Posterior cingulate gyrus (tissue), 11 donors: ENCODE measurements at regions of chr4 and their contacts with region 1.

Region 1: GRCh38 chr4:147160908-147161513 is 215.3 kb upstream of the TTC29 start:
- DNase-seq: no peak

Region 2: DNA sequence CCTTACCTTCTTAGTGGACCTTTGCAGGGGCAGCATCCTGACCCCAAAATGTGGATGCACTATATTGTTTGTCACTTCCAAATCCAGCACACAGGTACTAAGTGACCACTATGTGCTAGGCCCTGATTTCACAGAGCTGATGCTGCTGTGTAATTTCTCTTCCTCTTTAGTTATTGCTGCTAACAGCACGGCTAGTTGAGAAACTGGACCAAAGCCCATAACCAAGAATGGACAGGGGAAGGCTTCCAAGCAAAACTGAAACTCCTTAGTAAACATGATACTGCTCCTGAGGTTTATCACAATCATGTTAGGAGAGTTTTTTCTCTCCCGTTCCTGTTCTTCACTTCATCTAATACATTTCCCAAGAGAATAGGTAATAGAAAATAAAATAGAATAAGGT is 42.5 kb before region 1 on chr4:
- intact Hi-C with region 1: no loop called
- DNase-seq: no peak

Region 3: GRCh38 chr4:147518846-147519767 is 358.1 kb after region 1 on chr4:
- intact Hi-C with region 1: loop called (anchors 10 kb)
- DNase-seq: peak in 7 of 10 donors; percentile 16 to 83 (median 44)